ENCODE measurements at regions of chr4 and their contacts with region 1.

Region 1: DNA sequence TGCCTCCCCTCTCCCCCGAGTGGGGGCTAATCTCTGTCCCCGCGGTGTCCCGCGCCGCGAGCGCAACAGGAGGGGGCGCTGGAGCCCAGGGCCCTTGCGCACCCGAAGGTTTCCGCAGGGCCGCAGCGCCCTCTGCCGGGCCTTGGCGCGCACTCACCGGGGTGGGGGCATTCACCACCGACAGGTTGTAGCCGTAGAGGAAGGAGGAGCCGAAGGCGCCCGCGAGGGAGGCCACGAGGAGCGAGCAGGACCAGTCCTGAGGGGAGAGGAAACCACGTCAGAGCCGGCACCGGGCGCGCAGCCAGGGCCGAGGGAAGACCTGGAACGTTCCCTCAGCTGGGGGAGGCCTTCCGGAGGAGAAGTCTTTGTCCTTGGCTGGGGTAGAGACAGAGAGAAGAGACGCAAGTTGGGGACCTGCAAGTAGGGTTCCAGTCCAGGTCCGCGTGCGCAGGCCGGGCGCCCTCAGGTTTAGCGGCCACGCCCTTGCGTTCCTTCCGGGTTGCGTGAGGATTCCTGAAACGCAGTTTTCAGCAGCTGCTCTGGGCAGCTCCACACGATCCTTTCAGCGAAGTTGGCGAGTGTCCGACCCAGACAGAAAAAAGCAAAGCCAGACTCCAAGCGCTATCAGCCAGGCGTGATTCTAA is 2.4 kb downstream of the SLC2A9 start:
- DNase-seq: peak; percentile 56 to 95 (median 92)
- H3K4me3 ChIP-seq: peak overlapping the region; percentile 22 to 69 (median 56)
- H3K27ac ChIP-seq: peak overlapping the region; percentile 19 to 95 (median 88)
- H3K27me3 ChIP-seq: no peaks in the 10 kb centered on the region
- CTCF ChIP-seq: peak; percentile 88 to 100 (median 99)

Region 2: DNA sequence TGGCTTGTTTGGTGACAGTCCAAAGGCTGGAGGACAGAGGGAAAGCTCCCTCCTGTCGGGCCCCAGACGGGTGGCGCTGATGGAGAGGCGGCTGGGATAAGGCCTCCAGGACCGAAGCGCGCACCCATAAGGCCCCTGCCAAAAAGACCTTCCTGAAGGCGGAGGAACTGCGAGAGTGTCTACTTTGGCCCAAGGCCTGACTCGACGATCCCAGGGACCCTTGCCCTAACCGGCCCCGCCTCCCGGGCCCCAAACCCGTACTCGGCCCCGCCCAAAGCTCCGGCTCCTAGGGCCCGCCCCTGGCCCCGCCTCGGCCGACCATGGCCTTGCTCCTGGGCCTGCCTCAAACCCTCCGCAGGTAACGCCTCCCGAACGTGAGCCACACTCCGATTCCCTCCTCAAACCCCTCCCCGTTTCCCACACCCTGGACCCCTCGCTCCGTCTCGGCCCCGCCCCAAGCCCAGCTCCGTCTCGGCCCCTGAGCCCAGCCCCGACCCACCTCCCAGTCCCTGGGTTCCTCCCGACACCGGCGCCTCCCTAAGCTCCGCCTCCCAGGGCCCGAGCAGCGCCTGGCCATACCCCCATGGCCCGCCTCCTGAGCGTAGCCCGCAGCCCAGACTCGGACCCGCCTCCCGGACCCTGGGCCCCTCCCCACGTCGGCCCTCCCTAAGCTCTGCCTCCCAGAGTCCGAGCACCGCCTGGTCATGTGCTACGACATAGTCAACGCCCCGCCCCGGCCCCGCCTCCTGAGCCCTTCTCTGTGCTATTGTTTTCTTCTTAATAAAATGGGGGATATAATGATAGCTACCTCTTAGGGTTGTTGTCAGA is 327.5 kb before region 1 on chr4:
- intact Hi-C with region 1: loop called in 1 of 2 experiments (anchors 5 kb)
- DNase-seq: peak; percentile 93 to 98 (median 96)
- H3K4me3 ChIP-seq: peak overlapping the region; percentile 42 to 86 (median 74)
- H3K27ac ChIP-seq: peak overlapping the region; percentile 47 to 90 (median 83)
- H3K27me3 ChIP-seq: no peaks in the 10 kb centered on the region
- CTCF ChIP-seq: peak in 7 of 56 donors; percentile 3 to 23 (median 14)

Region 3: DNA sequence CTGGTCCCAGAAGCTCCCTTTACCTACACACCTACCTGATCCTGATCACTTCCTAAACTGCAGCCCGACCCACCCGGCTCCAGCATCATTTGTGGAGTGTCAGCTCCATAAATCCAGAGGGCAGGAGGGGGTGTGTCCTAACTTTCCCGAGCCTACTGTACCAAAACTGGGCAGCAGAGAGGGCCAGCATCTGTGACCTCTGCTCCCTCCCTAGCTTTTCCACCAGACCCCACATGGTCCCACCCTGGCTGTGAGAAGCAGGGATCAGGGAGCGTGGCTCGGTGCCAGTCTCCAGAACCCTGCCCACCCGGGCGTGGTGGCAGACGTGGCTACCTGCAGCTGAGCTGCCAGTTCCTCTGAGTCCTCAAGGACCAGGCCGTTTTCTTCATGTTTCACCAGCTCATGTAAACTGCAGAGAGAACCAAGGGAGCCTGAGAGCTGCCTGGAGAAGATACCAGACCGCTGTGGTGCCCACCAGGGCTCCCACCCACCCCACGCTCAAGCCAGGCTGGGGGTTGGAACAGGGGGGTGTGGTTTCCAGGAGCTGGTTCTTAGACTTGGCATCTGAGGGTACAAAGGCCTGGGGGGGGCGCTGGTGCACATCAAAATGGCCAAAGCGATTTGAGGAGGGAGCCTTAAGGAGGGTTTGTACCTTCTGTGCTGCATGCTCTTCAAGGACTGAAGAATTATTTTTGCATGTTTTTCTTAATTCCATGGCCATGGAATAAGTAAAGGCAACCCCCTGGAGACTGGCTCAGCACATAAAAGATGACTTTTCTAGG is 314.2 kb before region 1 on chr4:
- intact Hi-C with region 1: loop called in 1 of 2 experiments (anchors 10 kb)
- DNase-seq: no peak
- H3K4me3 ChIP-seq: no peak overlapping the region
- H3K27ac ChIP-seq: no peak overlapping the region
- H3K27me3 ChIP-seq: no peaks in the 10 kb centered on the region
- CTCF ChIP-seq: no peak

Region 4: GRCh38 chr4:9762823-9763475 is 256.0 kb before region 1 on chr4:
- intact Hi-C with region 1: loop called (anchors 1 to 2 kb)
- DNase-seq: peak in 7 of 10 donors; percentile 33 to 69 (median 54)
- H3K4me3 ChIP-seq: no peak overlapping the region
- H3K27ac ChIP-seq: no peak overlapping the region
- H3K27me3 ChIP-seq: peaks cover 0 to 13% (median 0%) of the 10 kb centered on the region in 45 donors
- CTCF ChIP-seq: peak; percentile 39 to 90 (median 74)

Region 5: GRCh38 chr4:10063544-10064300 is 44.8 kb after region 1 on chr4:
- intact Hi-C with region 1: loop called (anchors 1 to 5 kb)
- DNase-seq: peak in 9 of 10 donors; percentile 42 to 83 (median 76)
- H3K4me3 ChIP-seq: no peak overlapping the region
- H3K27ac ChIP-seq: peak overlapping the region in 39 of 59 donors; percentile 2 to 79 (median 47)
- H3K27me3 ChIP-seq: no peaks in the 10 kb centered on the region
- CTCF ChIP-seq: peak in 55 of 56 donors; percentile 30 to 94 (median 81)

Region 6: GRCh38 chr4:10116580-10117358 is 97.8 kb after region 1 on chr4 and contains the start of gene WDR1:
- intact Hi-C with region 1: loop called (anchors 5 kb)
- DNase-seq: peak; percentile 88 to 95 (median 93)
- H3K4me3 ChIP-seq: peak within 1 kb of the TSS; percentile 60 to 89 (median 78)
- H3K27ac ChIP-seq: peak within 1 kb of the TSS; percentile 72 to 99 (median 92)
- H3K27me3 ChIP-seq: no peaks in the 10 kb centered on the region
- CTCF ChIP-seq: peak in 15 of 56 donors; percentile 3 to 48 (median 18)
- total RNA-seq, gene WDR1: 67.7 to 164 (median 107) TPM

Region 7: DNA sequence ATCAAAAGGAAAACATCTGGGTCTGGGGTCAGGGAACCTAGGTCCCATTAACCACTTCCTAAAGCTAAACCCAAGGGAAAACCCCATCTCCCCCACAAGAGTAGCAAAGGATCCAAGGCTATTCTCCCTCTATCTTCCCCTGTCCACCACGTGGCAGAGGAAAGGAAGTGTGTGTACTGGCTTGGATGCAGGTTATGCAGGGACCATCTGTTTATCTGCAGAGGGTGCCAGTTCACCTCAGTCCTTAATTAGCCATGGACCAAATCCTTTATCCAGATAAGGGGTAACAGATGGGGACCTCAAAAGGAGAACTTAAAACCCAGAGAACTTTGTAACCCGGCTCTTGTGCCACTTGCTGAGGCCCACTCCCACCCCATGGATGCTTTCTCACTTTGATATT is 303.0 kb after region 1 on chr4:
- intact Hi-C with region 1: no loop called
- DNase-seq: peak in 1 of 10 donors; percentile 78
- H3K4me3 ChIP-seq: no peak overlapping the region
- H3K27ac ChIP-seq: no peak overlapping the region
- H3K27me3 ChIP-seq: peaks cover 0 to 13% (median 0%) of the 10 kb centered on the region in 45 donors
- CTCF ChIP-seq: no peak